Adrenal gland (tissue), 19 donors: ENCODE measurements at regions of chr5 and their contacts with region 1.

Region 1: DNA sequence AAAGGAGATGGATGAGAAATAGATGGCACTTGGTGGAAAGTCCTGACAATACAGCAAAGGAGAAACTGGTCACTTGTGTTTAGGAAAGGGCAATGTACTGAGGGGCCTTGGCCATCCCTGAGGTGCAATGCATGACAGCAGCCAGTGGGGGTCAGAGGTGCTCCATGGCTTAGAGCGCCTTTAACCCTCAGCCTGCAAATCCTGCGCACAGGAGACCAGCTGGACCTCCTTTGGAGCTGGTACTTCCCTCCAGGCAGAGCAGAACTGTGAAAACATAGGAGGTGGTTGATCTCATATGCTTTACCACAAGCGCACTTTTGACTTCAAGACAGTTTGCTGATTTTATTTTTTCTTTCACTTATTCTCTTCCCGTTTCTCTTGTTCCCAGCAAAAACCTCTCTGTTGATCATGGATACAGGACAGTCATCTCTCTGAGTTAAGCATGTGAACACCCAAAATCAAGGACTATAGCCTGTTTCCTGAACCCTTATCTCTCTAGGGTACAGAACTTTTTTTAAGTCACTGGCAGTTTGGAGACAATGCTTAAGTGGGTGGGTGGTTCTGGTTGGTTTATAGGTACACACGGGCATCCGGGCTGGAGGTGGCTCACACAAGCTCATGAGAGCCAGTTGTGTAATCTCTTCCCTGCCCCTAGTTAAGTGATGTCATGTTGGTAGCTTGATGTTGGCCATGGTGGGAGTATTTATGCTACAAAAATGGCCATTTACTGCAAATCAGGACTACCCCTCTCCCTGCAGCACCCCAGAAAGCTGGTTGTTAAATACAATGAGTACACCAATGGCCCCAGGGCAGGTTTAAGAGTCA is 37.6 kb upstream of the ANKRD55 start:
- DNase-seq: peak; percentile 78 to 94 (median 84)
- H3K4me3 ChIP-seq: no peak overlapping the region
- H3K27ac ChIP-seq: no peak overlapping the region
- H3K4me1 ChIP-seq: peaks cover 0 to 6% of the 10 kb centered on the region in 2 donors
- H3K27me3 ChIP-seq: no peaks in the 10 kb centered on the region
- CTCF ChIP-seq: peak; percentile 97 to 99 (median 99)
- POLR2A ChIP-seq: no peak

Region 2: DNA sequence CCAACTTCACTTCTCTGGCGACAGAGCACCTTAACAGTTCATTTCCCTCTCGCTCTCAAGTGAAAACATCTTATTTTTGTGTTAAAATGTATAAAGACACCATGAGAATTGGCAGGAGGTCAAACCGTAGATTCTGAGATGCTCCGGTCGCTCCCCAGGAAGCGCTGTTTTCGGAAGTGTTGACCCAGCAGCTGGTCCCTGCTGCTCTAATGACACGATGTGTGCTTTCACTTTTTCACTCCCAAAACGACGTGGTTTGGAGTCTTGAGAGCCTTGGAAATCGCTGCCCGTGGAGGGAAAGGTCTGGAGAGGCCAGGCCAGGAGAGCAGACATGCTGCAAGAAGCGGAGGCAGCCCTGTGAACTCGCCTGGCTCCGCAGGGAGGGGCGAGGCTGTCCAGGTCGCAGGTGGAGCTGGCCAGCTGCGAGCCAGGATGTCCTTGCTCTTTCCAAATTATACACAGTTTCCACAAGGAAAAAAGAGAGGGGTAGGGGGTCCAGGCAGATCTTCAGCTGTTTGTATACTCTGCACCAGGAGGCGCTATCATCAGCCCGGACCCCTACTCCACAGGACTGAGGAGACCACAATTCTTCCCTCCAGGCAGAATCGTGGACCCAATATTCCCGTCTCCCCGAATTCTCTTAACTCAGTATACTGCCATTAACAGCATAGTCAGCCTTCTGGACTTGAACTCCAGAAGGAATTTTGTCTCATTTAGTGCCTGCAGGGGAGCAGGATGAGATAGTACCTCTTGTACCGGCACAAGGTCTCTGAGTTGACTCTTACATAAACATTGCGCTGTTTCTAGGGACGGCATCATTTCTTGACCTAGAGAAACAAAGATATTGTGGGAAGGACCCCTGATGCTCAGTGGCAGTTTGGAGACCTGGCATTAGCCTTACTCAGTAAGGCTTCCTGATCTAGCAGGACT is 210.9 kb after region 1 on chr5:
- intact Hi-C with region 1: loop called in 1 of 2 experiments (anchors 10 kb)
- DNase-seq: peak; percentile 38 to 77 (median 56)
- H3K4me3 ChIP-seq: peak overlapping the region in 3 of 4 donors; percentile 46 to 75 (median 61)
- H3K27ac ChIP-seq: peak overlapping the region; percentile 56 to 93 (median 86)
- H3K4me1 ChIP-seq: peaks cover 15 to 30% of the 10 kb centered on the region in 2 donors
- H3K27me3 ChIP-seq: no peaks in the 10 kb centered on the region
- CTCF ChIP-seq: peak in 3 of 6 experiments; percentile 5 to 36 (median 20)
- POLR2A ChIP-seq: no peak

Region 3: GRCh38 chr5:56838409-56839039 is 567.7 kb after region 1 on chr5:
- intact Hi-C with region 1: loop called (anchors 2 to 10 kb)
- DNase-seq: peak in 2 of 7 donors; percentile 20 to 62
- H3K4me3 ChIP-seq: no peak overlapping the region
- H3K27ac ChIP-seq: peak overlapping the region in 4 of 5 donors; percentile 17 to 66 (median 24)
- H3K4me1 ChIP-seq: peaks cover 4 to 35% of the 10 kb centered on the region in 2 donors
- H3K27me3 ChIP-seq: no peaks in the 10 kb centered on the region
- CTCF ChIP-seq: peak; percentile 21 to 88 (median 66)
- POLR2A ChIP-seq: no peak